ENCODE measurements at regions of chr14 and their contacts with region 1.

Region 1: GRCh38 chr14:103920981-103921854 is 7.0 kb upstream of the TDRD9 start:
- DNase-seq: peak; percentile 88 to 95 (median 93)
- H3K4me3 ChIP-seq: peak overlapping the region; percentile 55 to 93 (median 91)
- H3K4me3 Mint-ChIP-seq: peak overlapping the region; percentile 90 to 97
- H3K27ac ChIP-seq: peak overlapping the region; percentile 87 to 96
- H3K27ac Mint-ChIP-seq: peak overlapping the region; percentile 92 to 98 (median 94)
- H3K4me1 ChIP-seq: peaks cover 35 to 44% of the 10 kb centered on the region in 2 donors
- H3K4me1 Mint-ChIP-seq: peaks cover 39% of the 10 kb centered on the region
- H3K27me3 ChIP-seq: no peaks in the 10 kb centered on the region
- H3K27me3 Mint-ChIP-seq: peaks cover 0 to 9% (median 0%) of the 10 kb centered on the region in 3 donors
- CTCF ChIP-seq: peak; percentile 97

Region 2: DNA sequence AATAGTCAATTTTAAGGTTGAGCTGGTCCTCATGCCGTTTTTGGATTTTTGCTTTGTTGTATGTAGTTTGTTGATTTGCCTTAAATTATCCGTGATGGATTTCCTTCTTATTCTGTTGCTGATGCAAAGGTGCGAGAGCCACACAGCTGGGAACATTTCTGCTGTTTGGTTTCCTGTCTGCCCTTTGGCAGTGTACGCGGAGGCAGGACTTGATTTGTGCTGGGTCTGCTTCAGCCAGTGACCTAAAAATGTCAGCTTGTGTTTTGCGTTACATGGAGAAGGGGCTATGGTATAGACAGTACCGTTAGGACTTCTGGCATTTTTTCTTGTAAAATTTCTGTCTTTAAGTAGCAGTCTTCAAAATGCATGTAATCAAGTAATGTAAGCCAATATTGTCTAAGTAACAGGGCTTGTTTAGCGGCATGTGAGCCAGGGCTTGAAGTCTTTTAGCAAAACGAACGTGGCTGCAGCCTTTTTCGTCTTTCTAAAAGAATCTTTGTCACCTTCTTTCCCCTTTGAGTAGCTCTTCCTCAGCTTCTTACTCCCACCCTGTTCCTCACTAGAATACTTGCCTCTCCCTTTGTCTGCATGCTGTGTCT is 39.3 kb after region 1 on chr14:
- intact Hi-C with region 1: loop called in 1 of 2 experiments (anchors 5 kb)
- DNase-seq: no peak
- H3K4me3 ChIP-seq: no peak overlapping the region
- H3K4me3 Mint-ChIP-seq: no peak overlapping the region
- H3K27ac ChIP-seq: no peak overlapping the region
- H3K27ac Mint-ChIP-seq: no peak overlapping the region
- H3K4me1 ChIP-seq: no peaks in the 10 kb centered on the region
- H3K4me1 Mint-ChIP-seq: peaks cover 8% of the 10 kb centered on the region
- H3K27me3 ChIP-seq: no peaks in the 10 kb centered on the region
- H3K27me3 Mint-ChIP-seq: peaks cover 0 to 5% (median under 1%) of the 10 kb centered on the region in 3 donors
- CTCF ChIP-seq: no peak

Measured in CD14-positive monocyte (primary cell).